Naive thymus-derived CD4-positive, alpha-beta T cell (primary cell): ENCODE measurements at regions of chr1 and their contacts with region 1.

Region 1: DNA sequence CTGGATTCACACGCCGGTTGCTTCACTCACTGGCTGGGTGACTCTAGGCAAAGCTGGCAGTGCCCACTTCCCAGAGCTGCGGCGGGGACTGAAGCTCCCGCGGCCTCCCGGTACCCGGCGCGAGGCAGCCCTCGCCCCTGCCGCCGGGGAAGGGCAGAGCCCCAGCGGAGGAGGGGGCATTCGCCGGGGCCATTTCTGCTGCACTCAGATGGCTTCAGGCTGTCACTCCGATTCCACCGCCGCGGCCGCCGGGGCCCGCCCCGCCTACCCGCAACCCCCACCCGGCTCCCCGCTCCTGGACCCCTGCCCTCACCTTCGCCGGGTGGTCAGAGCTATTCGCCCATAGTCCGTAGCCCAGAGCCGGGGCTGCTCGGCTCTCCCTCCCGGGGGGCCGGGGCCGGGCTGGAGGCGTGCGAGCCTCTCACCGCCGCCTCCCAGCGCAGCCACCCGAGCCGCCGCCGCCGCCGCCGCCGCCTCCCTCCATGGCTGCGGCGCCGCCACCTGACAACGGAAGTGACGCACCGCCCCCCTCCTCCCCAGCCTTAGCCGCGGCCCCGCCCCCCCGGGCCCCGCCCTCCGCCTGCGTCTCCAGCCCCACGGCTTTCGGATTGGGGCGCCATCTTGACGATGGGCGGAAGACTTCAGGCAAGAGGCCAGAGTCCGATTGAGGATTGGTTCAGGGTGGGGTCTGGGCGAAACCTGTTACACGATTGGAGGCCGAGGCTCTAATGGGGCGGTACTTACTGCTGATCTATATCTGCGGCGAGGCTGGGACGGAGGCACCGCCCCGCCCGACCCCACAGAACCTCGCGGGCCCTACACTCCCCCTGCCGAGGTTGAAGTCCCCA is at the start of gene STK40:
- DNase-seq: peak; percentile 83 to 99 (median 96)
- ATAC-seq: peak; percentile 92
- H3K4me3 ChIP-seq: peak within 1 kb of the TSS; percentile 96
- H3K4me3 Mint-ChIP-seq: peak within 1 kb of the TSS; percentile 85 to 95 (median 93)
- H3K27ac ChIP-seq: peak within 1 kb of the TSS; percentile 97
- H3K27ac Mint-ChIP-seq: peak within 1 kb of the TSS; percentile 95 to 99 (median 97)
- H3K4me1 ChIP-seq: peaks cover 26 to 29% of the 10 kb centered on the region in 2 donors
- H3K4me1 Mint-ChIP-seq: peaks cover 52 to 67% (median 57%) of the 10 kb centered on the region in 7 donors
- H3K27me3 ChIP-seq: no peaks in the 10 kb centered on the region
- H3K27me3 Mint-ChIP-seq: no peaks in the 10 kb centered on the region
- total RNA-seq, gene STK40: 27.6 to 56.8 (median 48.2) TPM

Region 2: DNA sequence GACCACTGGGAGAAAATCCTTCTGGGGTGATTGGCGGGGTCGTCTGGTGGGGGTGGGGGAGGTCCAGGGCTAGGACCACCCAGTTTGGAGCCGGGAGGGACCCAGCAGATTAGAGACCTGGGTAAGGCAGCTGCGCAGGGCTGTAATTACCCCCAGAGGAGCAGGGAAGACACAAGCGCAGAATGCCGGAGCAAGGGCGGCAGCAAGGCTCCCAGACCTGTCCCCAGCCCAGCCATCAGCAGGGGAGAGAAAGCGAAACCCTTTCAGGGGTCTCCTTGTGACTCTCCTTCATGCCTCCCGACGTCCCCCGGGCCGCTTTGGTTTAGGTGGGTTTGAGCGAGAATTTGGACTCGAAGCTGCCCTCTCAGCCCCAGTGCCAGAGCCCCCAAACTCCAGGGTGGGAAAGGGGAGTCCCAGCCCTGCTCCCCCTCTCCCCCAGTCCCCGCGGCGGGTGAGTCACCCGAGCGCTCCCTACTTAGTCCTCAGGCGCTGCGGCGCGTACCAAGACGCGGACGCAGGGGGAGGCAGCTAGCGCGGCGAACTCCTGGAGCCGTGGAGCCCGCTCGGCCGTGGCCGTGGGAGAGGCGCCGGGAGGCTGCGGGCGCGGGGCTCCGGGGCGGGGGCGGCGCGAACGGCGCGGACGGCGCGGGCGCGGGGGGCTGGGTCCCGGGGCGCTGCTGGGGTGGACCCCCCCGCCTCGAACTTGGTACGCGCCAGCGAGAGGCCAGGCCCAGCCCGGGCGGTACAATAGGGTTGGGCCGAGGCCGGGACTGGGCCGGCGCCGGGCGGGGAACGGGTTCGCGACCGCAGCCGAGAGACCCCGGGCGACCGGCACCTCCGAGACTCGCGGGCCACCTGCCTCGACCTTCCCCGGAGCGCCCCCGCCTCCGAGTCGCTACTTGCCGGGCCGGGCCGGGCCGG is 230.0 kb before region 1 on chr1 and contains the start of gene MAP7D1:
- CTCF ChIA-PET with region 1: no interaction called
- POLR2A ChIA-PET with region 1: interaction called, 4 read pairs
- intact Hi-C with region 1: loop called in 1 of 2 experiments (anchors 2 kb)
- DNase-seq: peak; percentile 80 to 90 (median 87)
- ATAC-seq: peak; percentile 89
- H3K4me3 ChIP-seq: peak within 1 kb of the TSS; percentile 97
- H3K4me3 Mint-ChIP-seq: peak within 1 kb of the TSS; percentile 85 to 95 (median 93)
- H3K27ac ChIP-seq: peak within 1 kb of the TSS; percentile 97
- H3K27ac Mint-ChIP-seq: peak within 1 kb of the TSS; percentile 90 to 99 (median 97)
- H3K4me1 ChIP-seq: peaks cover 58 to 66% of the 10 kb centered on the region in 2 donors
- H3K4me1 Mint-ChIP-seq: peaks cover 58 to 79% (median 71%) of the 10 kb centered on the region in 7 donors
- H3K27me3 ChIP-seq: no peaks in the 10 kb centered on the region
- H3K27me3 Mint-ChIP-seq: no peaks in the 10 kb centered on the region
- total RNA-seq, gene MAP7D1: 156 to 257 (median 235) TPM

Region 3: GRCh38 chr1:36323597-36324352 is 61.9 kb before region 1 on chr1 and contains the start of gene EVA1B:
- CTCF ChIA-PET with region 1: no interaction called
- POLR2A ChIA-PET with region 1: no interaction called
- intact Hi-C with region 1: loop called in 1 of 2 experiments (anchors 1 kb)
- DNase-seq: peak in 4 of 9 donors; percentile 19 to 72 (median 22)
- ATAC-seq: peak; percentile 37
- H3K4me3 ChIP-seq: peak within 1 kb of the TSS; percentile 74
- H3K4me3 Mint-ChIP-seq: peak within 1 kb of the TSS; percentile 70 to 87 (median 80)
- H3K27ac ChIP-seq: peak within 1 kb of the TSS; percentile 46
- H3K27ac Mint-ChIP-seq: peak within 1 kb of the TSS in 7 of 9 donors; percentile 14 to 77 (median 59)
- H3K4me1 ChIP-seq: peaks cover 10 to 11% of the 10 kb centered on the region in 2 donors
- H3K4me1 Mint-ChIP-seq: peaks cover 14 to 35% (median 23%) of the 10 kb centered on the region in 7 donors
- H3K27me3 ChIP-seq: no peaks in the 10 kb centered on the region
- H3K27me3 Mint-ChIP-seq: peaks cover 0 to 5% (median 0%) of the 10 kb centered on the region in 5 donors
- total RNA-seq, gene EVA1B: 1.5 to 12.5 (median 2.2) TPM

Region 4: GRCh38 chr1:36350659-36351226 is 34.9 kb before region 1 on chr1:
- CTCF ChIA-PET with region 1: interaction called, 6 read pairs
- POLR2A ChIA-PET with region 1: interaction called, 11 read pairs
- intact Hi-C with region 1: loop called in 1 of 2 experiments (anchors 1 kb)
- DNase-seq: peak in 8 of 9 donors; percentile 43 to 75 (median 52)
- ATAC-seq: peak; percentile 96
- H3K4me3 ChIP-seq: no peak overlapping the region
- H3K4me3 Mint-ChIP-seq: peak overlapping the region; percentile 17 to 74 (median 50)
- H3K27ac ChIP-seq: peak overlapping the region; percentile 50
- H3K27ac Mint-ChIP-seq: peak overlapping the region; percentile 75 to 94 (median 87)
- H3K4me1 ChIP-seq: peaks cover 4 to 22% of the 10 kb centered on the region in 2 donors
- H3K4me1 Mint-ChIP-seq: peaks cover 6 to 38% (median 33%) of the 10 kb centered on the region in 7 donors
- H3K27me3 ChIP-seq: no peaks in the 10 kb centered on the region
- H3K27me3 Mint-ChIP-seq: no peaks in the 10 kb centered on the region

Region 5: DNA sequence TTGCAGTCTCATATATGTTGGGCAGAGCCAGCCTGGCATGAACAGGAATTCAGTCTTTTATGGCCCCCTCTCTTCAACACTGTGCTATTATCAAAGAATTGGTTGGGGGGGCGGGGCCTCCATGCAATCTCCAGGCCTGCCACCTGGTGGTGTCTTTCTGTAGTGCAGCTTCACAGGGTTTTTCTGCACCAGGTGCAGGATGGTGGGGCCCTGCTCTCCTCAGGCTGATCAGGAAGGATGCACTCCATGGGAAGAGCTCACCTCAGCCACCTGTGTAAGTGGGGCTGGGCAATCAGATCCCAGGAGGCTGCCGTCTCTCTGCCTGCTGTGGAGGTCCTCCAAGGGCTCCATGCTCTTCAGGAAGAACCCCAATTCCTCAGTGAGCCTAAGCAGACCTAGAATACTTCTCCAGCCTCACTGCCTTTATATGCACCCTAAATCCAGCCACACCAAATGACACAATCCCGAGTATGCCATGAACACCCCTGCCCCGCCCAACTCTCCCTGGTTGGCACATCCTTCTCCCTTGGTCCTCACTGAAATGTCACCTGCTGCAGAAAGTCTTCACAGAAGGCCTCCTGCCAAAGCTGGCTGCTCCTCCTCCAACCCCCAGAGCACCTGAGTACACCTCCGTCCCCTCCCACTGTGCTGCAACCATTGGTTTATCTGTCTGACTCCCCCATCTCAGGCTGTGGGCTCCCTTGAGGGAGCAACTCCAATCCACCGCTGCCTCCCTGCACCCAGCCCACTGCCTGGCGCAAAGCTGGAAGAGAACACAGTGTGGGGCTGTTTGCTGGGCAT is 16.4 kb before region 1 on chr1:
- CTCF ChIA-PET with region 1: interaction called, 48 read pairs
- POLR2A ChIA-PET with region 1: interaction called, 4 read pairs
- intact Hi-C with region 1: loop called (anchors 1 kb)
- DNase-seq: peak; percentile 70 to 87 (median 80)
- ATAC-seq: peak; percentile 75
- H3K4me3 ChIP-seq: no peak overlapping the region
- H3K4me3 Mint-ChIP-seq: peak overlapping the region in 7 of 10 donors; percentile 2 to 57 (median 32)
- H3K27ac ChIP-seq: peak overlapping the region; percentile 37
- H3K27ac Mint-ChIP-seq: peak overlapping the region; percentile 56 to 97 (median 94)
- H3K4me1 ChIP-seq: peaks cover 27 to 59% of the 10 kb centered on the region in 2 donors
- H3K4me1 Mint-ChIP-seq: peaks cover 50 to 79% (median 69%) of the 10 kb centered on the region in 7 donors
- H3K27me3 ChIP-seq: no peaks in the 10 kb centered on the region
- H3K27me3 Mint-ChIP-seq: no peaks in the 10 kb centered on the region

Region 6: GRCh38 chr1:36420836-36421664 is 35.4 kb after region 1 on chr1:
- CTCF ChIA-PET with region 1: interaction called, 4 read pairs
- POLR2A ChIA-PET with region 1: interaction called, 6 read pairs
- intact Hi-C with region 1: loop called (anchors 1 kb)
- DNase-seq: peak; percentile 80 to 92 (median 89)
- ATAC-seq: peak; percentile 100
- H3K4me3 ChIP-seq: peak overlapping the region; percentile 17
- H3K4me3 Mint-ChIP-seq: peak overlapping the region; percentile 64 to 85 (median 77)
- H3K27ac ChIP-seq: peak overlapping the region; percentile 65
- H3K27ac Mint-ChIP-seq: peak overlapping the region; percentile 74 to 98 (median 93)
- H3K4me1 ChIP-seq: peaks cover 10 to 19% of the 10 kb centered on the region in 2 donors
- H3K4me1 Mint-ChIP-seq: peaks cover 11 to 37% (median 33%) of the 10 kb centered on the region in 7 donors
- H3K27me3 ChIP-seq: no peaks in the 10 kb centered on the region
- H3K27me3 Mint-ChIP-seq: no peaks in the 10 kb centered on the region

Region 7: DNA sequence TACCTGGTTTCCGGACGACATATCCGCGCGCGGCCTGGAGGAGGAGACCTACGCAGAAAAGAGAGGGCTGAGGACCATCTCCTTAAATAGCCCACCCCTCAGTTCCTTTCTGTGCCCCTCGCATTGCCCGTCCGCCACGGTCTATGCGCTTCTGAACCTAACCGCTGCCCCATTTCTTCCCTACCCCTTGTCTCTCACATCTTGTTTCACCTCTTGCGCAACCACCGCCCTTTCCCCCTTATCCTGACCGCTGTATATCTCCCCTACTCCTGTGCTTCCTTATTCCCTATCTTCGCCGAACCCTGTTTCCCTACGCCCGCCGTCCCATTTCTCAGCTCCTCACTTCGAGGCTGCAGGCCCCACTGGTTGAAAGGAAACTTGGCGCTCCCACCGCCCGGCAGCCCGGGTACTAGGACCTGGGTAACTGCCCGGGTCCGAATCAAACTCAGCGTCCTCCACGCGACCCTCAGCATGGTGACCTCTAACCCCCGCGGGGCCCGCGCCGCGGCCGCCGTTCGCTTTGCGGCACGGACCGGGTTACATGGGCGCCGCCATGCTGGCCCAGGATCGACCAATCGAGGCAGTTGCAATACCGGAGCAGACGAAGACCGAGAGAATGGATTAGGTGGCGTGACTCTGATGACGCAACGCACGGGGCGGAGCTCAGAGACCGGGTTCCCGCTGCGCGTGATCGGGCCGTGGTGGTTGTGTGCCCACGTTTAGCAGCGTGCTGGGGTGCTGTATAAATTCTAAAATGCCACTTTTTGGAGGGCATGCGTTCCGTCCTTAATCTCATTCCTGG is 78.4 kb after region 1 on chr1 and contains the start of gene MRPS15:
- CTCF ChIA-PET with region 1: no interaction called
- POLR2A ChIA-PET with region 1: interaction called, 3 read pairs
- intact Hi-C with region 1: loop called (anchors 1 to 5 kb)
- DNase-seq: peak; percentile 85 to 95 (median 93)
- ATAC-seq: peak; percentile 99
- H3K4me3 ChIP-seq: peak within 1 kb of the TSS; percentile 85
- H3K4me3 Mint-ChIP-seq: peak within 1 kb of the TSS; percentile 86 to 100 (median 97)
- H3K27ac ChIP-seq: peak within 1 kb of the TSS; percentile 91
- H3K27ac Mint-ChIP-seq: peak within 1 kb of the TSS; percentile 90 to 99 (median 98)
- H3K4me1 ChIP-seq: peaks cover 7 to 13% of the 10 kb centered on the region in 2 donors
- H3K4me1 Mint-ChIP-seq: peaks cover 18 to 54% (median 43%) of the 10 kb centered on the region in 7 donors
- H3K27me3 ChIP-seq: no peaks in the 10 kb centered on the region
- H3K27me3 Mint-ChIP-seq: no peaks in the 10 kb centered on the region
- total RNA-seq, gene MRPS15: 30.2 to 84.0 (median 36.3) TPM